Caco-2 (cell line): ENCODE measurements at regions of chr2 and their contacts with region 1.

Region 1: GRCh38 chr2:37832590-37833197 is 92.4 kb upstream of the RMDN2 start:
- DNase-seq: peak; percentile 91 to 93
- H3K4me3 ChIP-seq: no peak overlapping the region
- H3K4me3 Mint-ChIP-seq: no peak overlapping the region
- H3K27ac Mint-ChIP-seq: peak overlapping the region; percentile 13
- H3K4me1 ChIP-seq: peaks cover 32% of the 10 kb centered on the region
- H3K4me1 Mint-ChIP-seq: peaks cover 19% of the 10 kb centered on the region
- H3K27me3 ChIP-seq: no peaks in the 10 kb centered on the region
- H3K27me3 Mint-ChIP-seq: no peaks in the 10 kb centered on the region
- CTCF ChIP-seq: peak; percentile 86 to 89

Region 2: GRCh38 chr2:37414470-37414949 is 418.2 kb before region 1 on chr2:
- CTCF ChIA-PET with region 1: interaction called, 140 read pairs
- POLR2A ChIA-PET with region 1: no interaction called
- intact Hi-C with region 1: loop called (anchors 1 kb)
- DNase-seq: peak in 1 of 2 experiments; percentile 51
- H3K4me3 ChIP-seq: no peak overlapping the region
- H3K4me3 Mint-ChIP-seq: no peak overlapping the region
- H3K27ac Mint-ChIP-seq: no peak overlapping the region
- H3K4me1 ChIP-seq: peaks cover 9% of the 10 kb centered on the region; the same call in 1 of the 2 replicates
- H3K4me1 Mint-ChIP-seq: peaks cover 17% of the 10 kb centered on the region
- H3K27me3 ChIP-seq: no peaks in the 10 kb centered on the region
- H3K27me3 Mint-ChIP-seq: no peaks in the 10 kb centered on the region
- CTCF ChIP-seq: peak; percentile 88 to 92

Region 3: DNA sequence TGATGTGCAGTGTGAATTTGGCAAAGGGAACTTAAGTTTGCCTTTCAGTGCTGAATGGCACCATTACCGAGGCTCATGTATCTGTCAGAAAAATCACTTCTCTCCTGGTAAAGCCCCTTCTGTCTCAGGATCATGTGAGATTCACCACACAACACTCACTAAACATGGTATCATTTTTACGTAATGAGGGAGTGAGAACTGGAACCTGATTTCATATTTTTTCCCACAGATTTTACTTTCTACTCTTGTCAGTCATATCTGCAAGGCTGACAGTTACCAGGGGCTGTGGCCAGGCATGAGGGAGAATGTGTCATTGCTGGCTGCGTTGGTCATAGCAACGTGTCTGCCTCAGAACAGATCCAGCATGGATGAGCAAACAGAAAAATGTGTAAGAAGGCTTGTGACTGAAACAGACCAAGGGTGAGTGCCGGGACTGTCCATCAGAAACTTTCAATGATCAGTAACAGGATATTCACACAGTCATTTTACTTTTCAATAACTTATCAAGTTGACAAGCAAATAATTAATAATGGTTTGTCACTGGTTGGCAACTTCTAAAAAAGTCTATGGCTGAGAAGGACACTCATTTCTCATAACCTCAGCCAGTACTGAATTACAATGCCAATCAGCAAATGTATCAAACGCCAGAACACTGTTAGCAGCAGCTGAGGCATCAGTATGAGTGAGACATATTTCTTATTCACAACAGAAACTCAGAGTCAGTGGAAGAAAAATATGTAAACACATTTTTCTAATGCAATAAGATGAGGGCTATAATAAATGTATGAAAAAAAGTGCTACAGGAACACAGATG is 261.7 kb before region 1 on chr2:
- CTCF ChIA-PET with region 1: no interaction called
- POLR2A ChIA-PET with region 1: no interaction called
- intact Hi-C with region 1: loop called (anchors 1 kb)
- DNase-seq: peak in 1 of 2 experiments; percentile 69
- H3K4me3 ChIP-seq: no peak overlapping the region
- H3K4me3 Mint-ChIP-seq: peak overlapping the region; percentile 35
- H3K27ac Mint-ChIP-seq: peak overlapping the region; percentile 92
- H3K4me1 ChIP-seq: peaks cover 42% of the 10 kb centered on the region
- H3K4me1 Mint-ChIP-seq: peaks cover 52% of the 10 kb centered on the region
- H3K27me3 ChIP-seq: no peaks in the 10 kb centered on the region
- H3K27me3 Mint-ChIP-seq: no peaks in the 10 kb centered on the region
- CTCF ChIP-seq: no peak

Region 4: DNA sequence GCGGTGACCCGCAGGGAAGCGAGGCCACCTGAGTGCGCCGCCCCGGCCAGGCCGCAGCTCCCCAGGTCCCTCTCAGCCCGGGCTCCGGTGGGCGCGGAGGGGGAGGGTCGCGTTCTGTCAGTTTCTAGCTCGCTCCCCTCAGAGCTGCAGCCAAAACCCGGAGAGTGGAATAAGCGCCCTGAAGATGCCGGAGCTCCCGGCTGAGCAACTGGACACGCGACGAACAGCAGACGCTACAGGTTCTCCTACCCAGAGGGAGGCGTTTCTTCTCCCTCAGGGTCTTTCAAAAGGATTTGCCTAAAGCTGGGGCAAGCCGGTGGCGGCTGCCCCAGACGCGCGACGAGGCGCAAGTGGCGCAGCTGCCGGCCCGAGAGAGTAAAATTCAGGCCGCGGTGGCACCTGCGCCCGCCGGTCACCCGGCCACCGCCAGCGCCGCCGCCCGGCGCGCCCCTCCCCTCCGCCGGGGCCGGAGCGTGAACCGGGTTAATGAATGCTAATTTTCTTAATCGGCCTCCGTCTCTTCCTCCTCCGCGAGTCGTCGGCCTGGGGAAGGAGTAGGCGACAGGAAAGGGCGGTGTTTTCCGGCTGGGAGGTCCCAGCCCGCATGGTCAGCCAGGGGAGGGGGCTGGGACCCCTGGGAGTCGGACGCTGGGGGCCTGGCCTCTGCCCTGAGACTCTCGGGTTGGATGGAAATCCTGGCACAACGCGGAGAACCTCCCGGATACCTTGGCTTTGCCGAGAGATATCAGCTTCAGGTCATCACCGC is 160.4 kb before region 1 on chr2:
- CTCF ChIA-PET with region 1: interaction called, 11 read pairs
- POLR2A ChIA-PET with region 1: interaction called, 7 read pairs
- intact Hi-C with region 1: loop called (anchors 1 kb)
- DNase-seq: peak; percentile 94 to 95
- H3K4me3 ChIP-seq: peak overlapping the region; percentile 98
- H3K4me3 Mint-ChIP-seq: peak overlapping the region; percentile 73
- H3K27ac Mint-ChIP-seq: peak overlapping the region; percentile 20
- H3K4me1 ChIP-seq: peaks cover 47% of the 10 kb centered on the region
- H3K4me1 Mint-ChIP-seq: peaks cover 40% of the 10 kb centered on the region
- H3K27me3 ChIP-seq: no peaks in the 10 kb centered on the region
- H3K27me3 Mint-ChIP-seq: no peaks in the 10 kb centered on the region
- CTCF ChIP-seq: no peak

Region 5: GRCh38 chr2:37767956-37768925 is 64.5 kb before region 1 on chr2:
- CTCF ChIA-PET with region 1: interaction called, 5 read pairs
- POLR2A ChIA-PET with region 1: interaction called, 4 read pairs
- intact Hi-C with region 1: loop called (anchors 1 kb)
- DNase-seq: peak; percentile 60 to 70
- H3K4me3 ChIP-seq: no peak overlapping the region
- H3K4me3 Mint-ChIP-seq: peak overlapping the region; percentile 15
- H3K27ac Mint-ChIP-seq: peak overlapping the region; percentile 43
- H3K4me1 ChIP-seq: peaks cover 40% of the 10 kb centered on the region
- H3K4me1 Mint-ChIP-seq: peaks cover 41% of the 10 kb centered on the region
- H3K27me3 ChIP-seq: no peaks in the 10 kb centered on the region
- H3K27me3 Mint-ChIP-seq: no peaks in the 10 kb centered on the region
- CTCF ChIP-seq: no peak

Region 6: DNA sequence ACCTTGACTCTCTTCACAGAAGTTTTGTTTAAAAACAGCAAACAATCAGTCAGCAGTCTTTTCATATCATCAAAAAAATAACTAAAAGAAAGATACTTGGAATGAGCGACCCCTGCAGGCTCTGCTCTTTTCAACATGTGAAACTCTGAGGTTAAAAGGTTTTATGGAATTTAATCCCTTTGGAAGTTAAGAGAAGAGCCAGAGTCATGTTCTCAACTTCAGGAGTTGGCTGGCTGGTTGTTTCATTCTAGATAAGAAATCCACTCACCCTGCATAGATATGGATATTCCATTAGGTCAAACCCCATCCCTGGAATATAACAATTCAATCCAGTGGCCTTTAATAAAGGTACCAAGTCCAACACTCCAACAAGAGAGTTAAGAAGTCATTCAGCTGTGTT is 23.2 kb before region 1 on chr2:
- CTCF ChIA-PET with region 1: no interaction called
- POLR2A ChIA-PET with region 1: no interaction called
- intact Hi-C with region 1: loop called (anchors 2 kb)
- DNase-seq: peak in 1 of 2 experiments; percentile 21
- H3K4me3 ChIP-seq: no peak overlapping the region
- H3K4me3 Mint-ChIP-seq: no peak overlapping the region
- H3K27ac Mint-ChIP-seq: no peak overlapping the region
- H3K4me1 ChIP-seq: peaks cover 7% of the 10 kb centered on the region
- H3K4me1 Mint-ChIP-seq: peaks cover 20% of the 10 kb centered on the region
- H3K27me3 ChIP-seq: no peaks in the 10 kb centered on the region
- H3K27me3 Mint-ChIP-seq: no peaks in the 10 kb centered on the region
- CTCF ChIP-seq: peak; percentile 36 to 38